ENCODE measurements at regions of chr20 and their contacts with region 1.

Region 1: DNA sequence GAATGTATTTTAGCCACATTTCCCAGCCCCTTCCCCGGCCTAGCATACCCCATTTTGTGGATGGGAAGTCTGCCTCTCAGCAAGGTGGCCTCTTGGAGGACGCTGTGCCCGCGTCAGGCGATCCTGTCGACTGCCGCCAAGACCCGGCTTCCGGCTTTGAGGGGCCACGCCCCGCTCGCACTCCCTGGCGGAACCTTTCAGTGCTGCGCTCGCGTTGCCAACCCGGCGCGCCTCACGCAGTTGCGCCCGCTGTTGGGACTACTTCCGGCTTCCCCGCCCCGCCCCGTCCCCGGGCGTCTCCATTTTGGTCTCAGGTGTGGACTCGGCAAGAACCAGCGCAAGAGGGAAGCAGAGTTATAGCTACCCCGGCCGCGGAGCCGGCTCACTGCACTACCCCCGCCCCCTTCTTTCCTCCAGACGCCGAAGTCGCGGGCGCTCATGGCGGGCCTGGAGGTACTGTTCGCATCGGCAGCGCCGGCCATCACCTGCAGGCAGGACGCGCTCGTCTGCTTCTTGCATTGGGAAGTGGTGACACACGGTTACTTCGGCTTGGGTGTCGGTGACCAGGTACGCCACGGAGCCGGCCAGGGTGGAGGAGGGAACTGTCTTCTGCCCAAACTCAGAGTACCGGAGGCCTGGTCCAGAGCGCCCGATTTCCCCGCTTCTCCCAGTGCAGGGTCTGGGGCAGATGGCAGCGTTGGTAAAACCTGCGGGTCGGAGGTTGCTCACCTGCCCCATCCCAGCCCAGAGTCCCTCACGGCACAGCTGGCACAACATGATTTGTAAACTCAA is at the start of gene PSMF1:
- DNase-seq: peak; percentile 42
- H3K4me3 ChIP-seq: peak within 1 kb of the TSS; percentile 67
- H3K27me3 ChIP-seq: no peaks in the 10 kb centered on the region
- CTCF ChIP-seq: no peak
- polyA plus RNA-seq, gene PSMF1: 87.5 and 154 TPM in 2 replicates

Region 2: DNA sequence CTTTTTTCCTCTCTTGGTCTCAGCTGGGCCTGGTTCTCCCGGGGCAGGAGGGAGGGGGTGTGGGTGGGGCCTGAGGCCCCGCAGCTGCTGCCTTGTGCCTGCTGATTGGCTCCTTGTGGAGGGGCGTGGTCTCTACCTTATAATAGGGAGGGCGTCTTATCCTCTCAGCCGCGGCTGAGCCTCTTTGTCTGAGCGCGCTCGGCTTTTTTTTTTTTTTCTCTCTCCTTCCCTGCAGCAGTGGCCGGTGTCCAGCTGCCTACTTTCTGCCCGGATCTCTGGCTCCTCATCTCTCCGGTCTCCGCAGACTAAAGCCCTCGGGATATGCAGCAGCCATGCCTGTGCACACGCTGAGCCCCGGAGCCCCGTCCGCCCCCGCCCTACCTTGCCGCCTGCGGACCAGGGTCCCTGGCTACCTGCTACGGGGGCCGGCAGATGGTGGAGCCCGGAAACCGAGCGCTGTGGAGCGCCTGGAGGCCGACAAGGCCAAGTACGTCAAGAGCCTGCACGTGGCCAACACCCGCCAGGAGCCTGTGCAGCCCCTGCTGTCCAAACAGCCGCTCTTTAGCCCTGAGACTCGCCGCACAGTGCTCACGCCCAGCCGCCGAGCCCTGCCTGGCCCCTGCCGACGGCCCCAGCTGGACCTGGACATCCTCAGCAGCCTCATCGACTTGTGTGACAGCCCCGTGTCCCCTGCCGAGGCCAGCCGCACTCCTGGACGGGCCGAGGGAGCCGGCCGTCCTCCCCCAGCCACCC is 273.9 kb before region 1 on chr20:
- CTCF ChIA-PET with region 1: no interaction called
- POLR2A ChIA-PET with region 1: interaction called, 10 read pairs
- DNase-seq: peak; percentile 54
- H3K4me3 ChIP-seq: peak overlapping the region; percentile 37
- H3K27me3 ChIP-seq: no peaks in the 10 kb centered on the region
- CTCF ChIP-seq: no peak

Region 3: GRCh38 chr20:1144401-1145172 is 26.1 kb after region 1 on chr20:
- CTCF ChIA-PET with region 1: no interaction called
- POLR2A ChIA-PET with region 1: no interaction called
- DNase-seq: no peak
- H3K4me3 ChIP-seq: no peak overlapping the region
- H3K27me3 ChIP-seq: no peaks in the 10 kb centered on the region
- CTCF ChIP-seq: no peak